ENCODE measurements at regions of chr19 and their contacts with region 1.

Region 1: GRCh38 chr19:58558623-58559274 is 338 bp upstream of the UBE2M start:
- DNase-seq: peak; percentile 100
- H3K4me3 Mint-ChIP-seq: peak overlapping the region; percentile 94
- H3K27ac Mint-ChIP-seq: peak overlapping the region; percentile 99
- H3K4me1 Mint-ChIP-seq: peaks cover 48% of the 10 kb centered on the region
- H3K27me3 Mint-ChIP-seq: no peaks in the 10 kb centered on the region

Region 2: DNA sequence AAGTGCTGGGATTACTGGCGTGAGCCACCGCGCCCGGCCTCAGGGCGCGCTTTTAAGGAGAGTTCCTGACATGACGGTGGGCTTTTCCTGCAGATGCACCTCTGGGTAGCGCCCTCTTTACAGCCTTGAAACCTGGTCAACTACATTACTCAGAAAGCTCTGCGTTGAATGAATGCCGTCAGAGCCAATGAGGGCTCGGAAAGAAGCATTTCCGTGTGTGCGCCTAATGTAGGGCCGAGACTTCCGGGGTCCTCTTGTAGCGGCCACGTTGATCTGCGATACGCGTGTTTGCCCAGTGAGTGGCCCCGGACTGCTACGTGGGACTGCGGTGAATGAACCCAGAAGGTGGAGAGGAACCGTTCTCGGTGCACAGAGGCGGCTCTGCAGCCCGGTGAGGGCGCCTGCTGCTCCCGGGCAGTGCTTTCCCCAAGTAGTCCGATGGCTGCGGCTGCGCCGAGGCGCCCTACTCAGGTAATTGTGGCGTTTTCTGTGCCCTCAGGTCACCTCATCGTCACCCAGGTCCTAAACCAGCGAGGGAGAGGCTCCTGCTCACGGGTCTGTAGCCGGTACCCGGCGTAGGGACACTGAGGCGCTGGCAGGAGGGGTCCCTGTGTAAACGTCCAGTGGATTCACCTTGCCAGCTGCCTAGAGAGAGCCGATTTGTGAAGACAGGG is 739.1 kb before region 1 on chr19:
- intact Hi-C with region 1: no loop called
- DNase-seq: peak; percentile 80
- H3K4me3 Mint-ChIP-seq: peak overlapping the region; percentile 95
- H3K27ac Mint-ChIP-seq: peak overlapping the region; percentile 99
- H3K4me1 Mint-ChIP-seq: peaks cover 39% of the 10 kb centered on the region
- H3K27me3 Mint-ChIP-seq: no peaks in the 10 kb centered on the region

Region 3: DNA sequence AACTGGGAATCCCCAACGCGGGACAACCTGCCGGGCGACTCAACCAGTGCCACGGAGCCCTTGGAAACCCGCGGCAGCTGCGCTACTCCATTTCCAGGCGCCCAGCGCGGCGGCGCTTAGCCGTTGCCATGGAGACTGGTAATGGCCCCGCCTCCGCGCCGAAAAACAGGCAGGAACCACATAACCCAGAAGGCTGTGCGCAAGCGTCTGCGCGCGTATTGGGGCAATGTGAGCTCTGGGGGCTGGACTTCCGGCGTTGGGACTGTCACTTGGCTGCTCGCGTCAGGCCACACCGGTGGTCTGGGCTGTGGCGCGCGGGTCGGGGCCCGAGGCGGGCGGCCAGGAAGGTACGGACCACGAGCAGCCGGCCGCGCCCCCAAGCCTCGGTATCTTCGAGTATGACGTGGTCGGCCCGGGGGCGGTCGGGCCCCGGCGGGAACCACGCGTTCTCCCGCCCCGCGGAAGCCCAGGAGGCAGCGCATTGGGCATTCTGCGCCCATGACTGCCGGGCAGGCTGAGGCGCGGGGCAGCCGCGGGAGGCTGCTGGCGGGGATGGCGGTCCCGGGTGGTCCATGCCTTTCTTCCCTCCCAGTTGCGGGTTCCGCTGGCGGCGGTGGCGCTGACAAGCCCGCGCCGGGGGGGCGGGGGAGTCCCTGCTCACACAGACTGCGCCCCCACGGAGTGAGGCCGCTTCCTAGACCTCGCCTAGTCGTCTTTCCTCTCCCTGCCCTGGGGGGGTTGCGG is 107.2 kb before region 1 on chr19 and contains the start of gene ZNF324B:
- intact Hi-C with region 1: no loop called
- DNase-seq: peak; percentile 95
- H3K4me3 Mint-ChIP-seq: peak within 1 kb of the TSS; percentile 75
- H3K27ac Mint-ChIP-seq: no peak within 1 kb of the TSS
- H3K4me1 Mint-ChIP-seq: peaks cover 19% of the 10 kb centered on the region
- H3K27me3 Mint-ChIP-seq: peaks cover 3% of the 10 kb centered on the region
- total RNA-seq, gene ZNF324B: 9.6 and 11.3 TPM in 2 replicates

Region 4: GRCh38 chr19:58513694-58514563 is 44.8 kb before region 1 on chr19:
- intact Hi-C with region 1: loop called (anchors 1 kb)
- DNase-seq: peak; percentile 95
- H3K4me3 Mint-ChIP-seq: peak overlapping the region; percentile 88
- H3K27ac Mint-ChIP-seq: peak overlapping the region; percentile 91
- H3K4me1 Mint-ChIP-seq: peaks cover 26% of the 10 kb centered on the region
- H3K27me3 Mint-ChIP-seq: no peaks in the 10 kb centered on the region

Region 5: GRCh38 chr19:58543826-58544590 is 14.7 kb before region 1 on chr19 and contains the start of gene TRIM28:
- intact Hi-C with region 1: loop called (anchors 1 kb)
- DNase-seq: peak; percentile 100
- H3K4me3 Mint-ChIP-seq: peak within 1 kb of the TSS; percentile 91
- H3K27ac Mint-ChIP-seq: peak within 1 kb of the TSS; percentile 94
- H3K4me1 Mint-ChIP-seq: peaks cover 22% of the 10 kb centered on the region
- H3K27me3 Mint-ChIP-seq: peaks cover 20% of the 10 kb centered on the region
- total RNA-seq, gene TRIM28: 658 and 662 TPM in 2 replicates

Region 6: GRCh38 chr19:58572818-58573657 is 14.3 kb after region 1 on chr19 and contains the start of gene MZF1:
- intact Hi-C with region 1: loop called (anchors 1 kb)
- DNase-seq: peak; percentile 100
- H3K4me3 Mint-ChIP-seq: peak within 1 kb of the TSS; percentile 95
- H3K27ac Mint-ChIP-seq: peak within 1 kb of the TSS; percentile 100
- H3K4me1 Mint-ChIP-seq: peaks cover 21% of the 10 kb centered on the region
- H3K27me3 Mint-ChIP-seq: no peaks in the 10 kb centered on the region
- total RNA-seq, gene MZF1: 18.8 and 19.0 TPM in 2 replicates